ENCODE measurements at regions of chr9 and their contacts with region 1.

Region 1: DNA sequence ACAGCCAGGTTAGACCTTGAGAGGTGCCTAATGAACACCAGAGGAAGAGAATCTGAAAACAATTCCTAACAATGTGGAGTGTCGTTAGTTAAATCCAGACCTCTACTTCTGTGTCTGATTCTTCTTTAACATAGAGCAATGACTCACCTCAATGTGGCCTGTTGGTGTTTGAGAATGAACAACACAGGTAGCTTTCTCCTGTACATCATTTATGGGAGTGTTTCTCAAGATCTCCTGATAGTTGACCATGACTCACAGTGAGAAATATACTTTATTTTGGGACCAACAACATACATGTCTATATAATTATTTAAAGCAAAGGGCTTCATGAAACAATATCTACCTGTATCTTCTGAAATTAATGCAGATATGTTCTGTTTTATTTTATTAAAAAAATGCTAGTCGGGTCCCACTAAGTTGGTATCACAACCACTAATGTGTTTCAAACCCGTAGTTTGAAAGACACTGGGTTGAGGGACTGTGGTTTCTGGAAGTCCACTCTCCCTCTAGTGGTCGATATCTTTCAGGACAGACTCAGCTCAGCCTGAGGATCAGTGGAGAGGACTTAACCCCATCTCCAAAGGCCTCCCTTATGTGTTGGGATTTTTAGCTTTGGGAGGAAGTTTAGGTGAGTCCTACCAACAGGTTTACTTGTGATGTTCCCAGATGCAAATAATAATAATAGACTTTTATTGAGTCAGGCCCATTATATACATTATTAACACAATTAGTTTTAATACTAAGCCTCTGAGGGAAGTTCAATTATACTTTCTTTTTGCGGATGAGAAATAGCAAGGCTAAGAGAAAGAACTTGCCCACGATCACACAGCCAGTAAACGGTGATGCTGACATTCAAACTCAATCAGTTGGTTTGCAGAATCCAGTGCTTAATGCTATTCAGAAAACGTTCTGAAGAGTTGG is 70.0 kb upstream of the KLF9 start:
- DNase-seq: peak; percentile 38
- H3K4me3 ChIP-seq: no peak overlapping the region
- H3K27ac ChIP-seq: no peak overlapping the region
- H3K4me1 ChIP-seq: no peaks in the 10 kb centered on the region
- CTCF ChIP-seq: peak; percentile 74

Region 2: GRCh38 chr9:70285981-70286598 is 198.4 kb before region 1 on chr9:
- CTCF ChIA-PET with region 1: no interaction called
- POLR2A ChIA-PET with region 1: interaction called, 12 read pairs
- intact Hi-C with region 1: no loop called
- DNase-seq: no peak
- H3K4me3 ChIP-seq: no peak overlapping the region
- H3K27ac ChIP-seq: no peak overlapping the region
- H3K4me1 ChIP-seq: no peaks in the 10 kb centered on the region
- CTCF ChIP-seq: no peak

Region 3: GRCh38 chr9:70340572-70340971 is 143.9 kb before region 1 on chr9:
- CTCF ChIA-PET with region 1: no interaction called
- POLR2A ChIA-PET with region 1: interaction called, 3 read pairs
- intact Hi-C with region 1: loop called (anchors 5 kb)
- DNase-seq: peak; percentile 35
- H3K4me3 ChIP-seq: no peak overlapping the region
- H3K27ac ChIP-seq: no peak overlapping the region
- H3K4me1 ChIP-seq: no peaks in the 10 kb centered on the region
- CTCF ChIP-seq: peak; percentile 83

Region 4: GRCh38 chr9:70504834-70505233 is 20.4 kb after region 1 on chr9:
- CTCF ChIA-PET with region 1: no interaction called
- POLR2A ChIA-PET with region 1: interaction called, 4 read pairs
- intact Hi-C with region 1: loop called (anchors 2 kb)
- DNase-seq: no peak
- H3K4me3 ChIP-seq: no peak overlapping the region
- H3K27ac ChIP-seq: no peak overlapping the region
- H3K4me1 ChIP-seq: no peaks in the 10 kb centered on the region
- CTCF ChIP-seq: no peak

Region 5: DNA sequence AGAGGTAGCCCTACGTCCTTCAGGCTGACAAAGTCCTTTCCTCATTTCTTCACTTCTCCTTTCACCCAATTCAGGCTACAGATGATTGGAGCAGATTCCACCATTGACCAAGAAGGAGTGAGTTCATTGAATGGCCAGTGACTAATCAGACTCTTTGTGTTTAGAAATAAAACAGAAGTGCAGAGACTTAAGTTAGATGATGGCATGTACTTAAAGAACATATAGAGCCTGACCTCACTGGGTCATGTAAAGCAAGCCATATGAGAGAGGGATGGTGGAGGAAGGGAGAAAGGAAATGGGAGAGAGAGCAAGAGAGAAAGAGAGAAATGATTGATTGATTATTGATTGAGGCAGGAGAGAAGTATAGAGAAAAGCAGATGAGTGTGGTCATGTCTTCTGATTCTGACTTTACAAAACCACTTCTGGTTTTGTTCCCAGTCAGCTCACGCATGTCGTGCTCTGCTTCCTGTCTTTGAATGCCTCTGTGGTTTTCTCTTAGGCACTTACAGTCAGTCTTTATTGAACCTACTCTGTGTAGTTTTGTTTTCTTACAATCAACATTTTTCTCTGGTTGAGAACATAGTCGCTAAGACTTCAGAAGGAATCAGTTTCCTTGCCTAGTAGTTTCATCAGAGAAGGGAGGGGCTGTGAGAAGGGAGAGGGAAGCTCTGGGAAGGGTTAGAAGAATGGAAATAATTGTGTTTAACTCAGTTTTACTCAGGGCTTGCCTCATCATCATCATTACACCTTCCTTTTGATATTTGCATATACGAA is 79.1 kb after region 1 on chr9:
- CTCF ChIA-PET with region 1: no interaction called
- POLR2A ChIA-PET with region 1: no interaction called
- intact Hi-C with region 1: no loop called
- DNase-seq: no peak
- H3K4me3 ChIP-seq: no peak overlapping the region
- H3K27ac ChIP-seq: no peak overlapping the region
- H3K4me1 ChIP-seq: no peaks in the 10 kb centered on the region
- CTCF ChIP-seq: no peak

Measured in OCI-LY7 (cell line).